Activated CD4-positive, alpha-beta T cell treated with anti-CD3 and anti-CD28 coated beads for 36 hours (primary cell): ENCODE measurements at regions of chr3 and their contacts with region 1.

Region 1: DNA sequence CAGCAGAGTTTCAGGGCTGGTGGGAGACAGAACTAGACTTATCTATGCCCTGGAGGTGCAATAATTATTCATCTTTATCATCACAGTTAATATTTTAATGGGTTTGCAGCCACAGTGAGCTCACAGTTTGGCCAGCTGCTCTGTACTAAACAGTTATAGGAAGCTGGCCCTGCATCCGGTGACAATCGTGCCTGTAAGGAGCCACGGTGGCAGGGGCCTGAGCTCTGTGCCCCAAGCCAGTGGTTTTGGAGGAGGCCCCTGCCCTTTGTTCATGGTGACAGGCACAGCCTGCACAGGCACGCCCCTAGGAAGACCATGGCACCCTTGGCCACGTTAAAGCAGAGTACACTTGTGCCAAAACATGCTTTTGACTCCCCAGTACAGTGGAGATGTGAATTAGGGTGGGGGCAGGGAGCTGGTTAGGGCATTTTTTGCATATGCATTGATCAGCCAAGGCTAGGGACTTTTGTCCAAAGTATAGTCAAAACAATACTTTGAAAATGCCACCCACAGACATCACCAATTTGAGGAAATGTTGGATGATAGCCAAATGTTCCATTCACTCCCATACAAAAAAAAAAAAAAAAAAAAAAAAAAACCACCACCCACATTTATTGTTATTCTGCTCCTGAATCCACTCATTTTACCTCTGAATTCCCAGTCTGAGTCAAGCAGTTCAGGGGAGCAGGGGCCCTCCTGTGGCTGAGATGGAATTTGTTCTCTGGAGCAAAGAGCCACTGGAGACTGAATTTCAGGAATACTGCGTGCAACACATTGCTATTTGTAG is 3.4 kb upstream of the RFTN1 start:
- DNase-seq: peak; percentile 62
- ATAC-seq: peak; percentile 6
- H3K4me3 Mint-ChIP-seq: peak overlapping the region; percentile 44
- H3K27ac Mint-ChIP-seq: peak overlapping the region; percentile 74
- H3K4me1 Mint-ChIP-seq: peaks cover 65% of the 10 kb centered on the region
- H3K27me3 Mint-ChIP-seq: no peaks in the 10 kb centered on the region

Region 2: GRCh38 chr3:16309558-16309957 is 207.3 kb before region 1 on chr3:
- CTCF ChIA-PET with region 1: interaction called, 8 read pairs
- POLR2A ChIA-PET with region 1: interaction called, 3 read pairs
- intact Hi-C with region 1: loop called (anchors 1 to 5 kb)
- DNase-seq: peak; percentile 69
- ATAC-seq: peak; percentile 78
- H3K4me3 Mint-ChIP-seq: peak overlapping the region; percentile 25
- H3K27ac Mint-ChIP-seq: peak overlapping the region; percentile 87
- H3K4me1 Mint-ChIP-seq: peaks cover 93% of the 10 kb centered on the region
- H3K27me3 Mint-ChIP-seq: no peaks in the 10 kb centered on the region

Region 3: GRCh38 chr3:16388850-16389441 is 127.9 kb before region 1 on chr3:
- CTCF ChIA-PET with region 1: no interaction called
- POLR2A ChIA-PET with region 1: no interaction called
- intact Hi-C with region 1: no loop called
- DNase-seq: no peak
- ATAC-seq: no peak
- H3K4me3 Mint-ChIP-seq: no peak overlapping the region
- H3K27ac Mint-ChIP-seq: no peak overlapping the region
- H3K4me1 Mint-ChIP-seq: peaks cover 56% of the 10 kb centered on the region
- H3K27me3 Mint-ChIP-seq: no peaks in the 10 kb centered on the region

Region 4: GRCh38 chr3:16433701-16434151 is 83.2 kb before region 1 on chr3:
- CTCF ChIA-PET with region 1: no interaction called
- POLR2A ChIA-PET with region 1: interaction called, 11 read pairs
- intact Hi-C with region 1: no loop called
- DNase-seq: no peak
- ATAC-seq: no peak
- H3K4me3 Mint-ChIP-seq: no peak overlapping the region
- H3K27ac Mint-ChIP-seq: no peak overlapping the region
- H3K4me1 Mint-ChIP-seq: peaks cover 18% of the 10 kb centered on the region
- H3K27me3 Mint-ChIP-seq: no peaks in the 10 kb centered on the region